Activated CD4-positive, alpha-beta memory T cell treated with anti-CD3 and anti-CD28 coated beads for 36 hours (primary cell): ENCODE measurements at regions of chr2 and their contacts with region 1.

Region 1: GRCh38 chr2:27191053-27191829 is 20.6 kb upstream of the ATRAID start:
- DNase-seq: peak; percentile 52
- H3K4me3 Mint-ChIP-seq: no peak overlapping the region
- H3K27ac Mint-ChIP-seq: no peak overlapping the region
- H3K4me1 Mint-ChIP-seq: no peaks in the 10 kb centered on the region
- H3K27me3 Mint-ChIP-seq: no peaks in the 10 kb centered on the region

Region 2: GRCh38 chr2:27050281-27050995 is 140.8 kb before region 1 on chr2:
- CTCF ChIA-PET with region 1: no interaction called
- POLR2A ChIA-PET with region 1: no interaction called
- intact Hi-C with region 1: no loop called
- DNase-seq: peak; percentile 97
- H3K4me3 Mint-ChIP-seq: peak overlapping the region; percentile 98
- H3K27ac Mint-ChIP-seq: peak overlapping the region; percentile 100
- H3K4me1 Mint-ChIP-seq: peaks cover 18% of the 10 kb centered on the region
- H3K27me3 Mint-ChIP-seq: peaks cover 8% of the 10 kb centered on the region

Region 3: GRCh38 chr2:27095745-27096651 is 95.2 kb before region 1 on chr2:
- CTCF ChIA-PET with region 1: interaction called, 6 read pairs
- POLR2A ChIA-PET with region 1: no interaction called
- intact Hi-C with region 1: loop called (anchors 1 kb)
- DNase-seq: peak; percentile 65
- H3K4me3 Mint-ChIP-seq: peak overlapping the region; percentile 31
- H3K27ac Mint-ChIP-seq: no peak overlapping the region
- H3K4me1 Mint-ChIP-seq: peaks cover 9% of the 10 kb centered on the region
- H3K27me3 Mint-ChIP-seq: no peaks in the 10 kb centered on the region

Region 4: DNA sequence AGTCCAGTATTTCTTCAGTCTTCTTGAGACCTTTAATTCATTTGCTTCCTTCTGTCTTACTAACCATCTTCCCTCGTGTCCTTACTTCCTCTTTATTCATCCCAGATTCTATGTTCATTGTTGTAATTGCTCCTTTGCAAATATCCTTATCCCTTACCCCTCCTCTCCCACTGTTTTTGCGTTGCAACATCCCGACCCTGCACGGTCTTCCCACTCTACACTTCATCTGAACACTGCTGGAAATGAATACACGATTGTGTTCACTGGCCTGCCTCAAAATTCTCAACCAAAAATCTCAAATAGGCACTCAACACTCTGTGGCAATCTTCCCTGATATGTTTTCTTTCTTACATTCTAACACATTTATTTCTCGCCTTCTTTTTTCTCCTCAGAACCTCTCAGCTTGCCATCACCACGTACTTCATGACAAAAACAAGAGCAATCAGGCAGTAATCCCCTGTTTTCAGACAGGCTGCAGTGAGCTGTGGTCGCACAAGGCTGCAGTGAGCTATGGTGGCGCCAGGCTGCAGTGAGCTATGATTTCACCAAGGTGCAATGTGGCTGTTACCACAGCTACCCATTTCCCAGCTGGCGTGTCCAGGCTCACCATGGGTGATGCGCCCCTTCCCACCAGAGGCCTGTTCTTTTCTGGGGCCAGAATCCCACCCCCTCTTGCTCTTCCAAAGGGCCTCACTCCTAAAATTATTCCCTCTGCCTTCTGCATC is 16.8 kb before region 1 on chr2:
- CTCF ChIA-PET with region 1: interaction called, 14 read pairs
- POLR2A ChIA-PET with region 1: no interaction called
- intact Hi-C with region 1: no loop called
- DNase-seq: no peak
- H3K4me3 Mint-ChIP-seq: no peak overlapping the region
- H3K27ac Mint-ChIP-seq: no peak overlapping the region
- H3K4me1 Mint-ChIP-seq: peaks cover 2% of the 10 kb centered on the region
- H3K27me3 Mint-ChIP-seq: peaks cover 7% of the 10 kb centered on the region